ENCODE measurements at regions of chr1 and their contacts with region 1.

Region 1: GRCh38 chr1:109667452-109668122 is at the start of gene GSTM2:
- DNase-seq: peak; percentile 96
- ATAC-seq: peak; percentile 100
- total RNA-seq, gene GSTM2: 194 TPM

Region 2: DNA sequence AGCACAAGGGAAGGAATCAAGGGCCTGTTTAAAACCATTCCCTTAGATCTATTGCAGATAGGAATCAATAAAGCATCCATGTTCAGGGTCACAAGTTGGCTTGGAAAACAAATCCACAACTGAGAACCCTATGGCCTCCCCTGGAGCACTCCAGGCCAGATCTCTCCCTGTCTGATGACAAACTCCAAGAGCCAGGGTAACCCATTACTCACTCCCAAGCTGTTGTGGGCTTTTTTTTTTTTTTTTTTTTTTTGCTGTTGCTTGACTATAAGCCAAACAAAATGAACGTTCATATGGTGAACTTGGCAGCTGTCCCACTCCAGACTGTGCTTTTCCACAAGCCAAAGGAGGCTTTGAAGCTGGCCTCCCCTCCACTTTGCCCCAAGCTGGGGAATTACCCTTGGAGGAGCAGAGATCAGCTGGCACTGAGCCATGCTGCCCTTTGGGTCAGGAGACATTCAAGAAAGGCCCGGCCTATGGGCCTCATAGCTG is 1666.9 kb before region 1 on chr1:
- intact Hi-C with region 1: no loop called
- DNase-seq: peak; percentile 72
- ATAC-seq: peak; percentile 24

Region 3: GRCh38 chr1:109483672-109484518 is 183.7 kb before region 1 on chr1 and contains the start of gene ATXN7L2:
- intact Hi-C with region 1: no loop called
- DNase-seq: peak; percentile 95
- ATAC-seq: peak; percentile 90
- total RNA-seq, gene ATXN7L2: 5.0 TPM

Region 4: DNA sequence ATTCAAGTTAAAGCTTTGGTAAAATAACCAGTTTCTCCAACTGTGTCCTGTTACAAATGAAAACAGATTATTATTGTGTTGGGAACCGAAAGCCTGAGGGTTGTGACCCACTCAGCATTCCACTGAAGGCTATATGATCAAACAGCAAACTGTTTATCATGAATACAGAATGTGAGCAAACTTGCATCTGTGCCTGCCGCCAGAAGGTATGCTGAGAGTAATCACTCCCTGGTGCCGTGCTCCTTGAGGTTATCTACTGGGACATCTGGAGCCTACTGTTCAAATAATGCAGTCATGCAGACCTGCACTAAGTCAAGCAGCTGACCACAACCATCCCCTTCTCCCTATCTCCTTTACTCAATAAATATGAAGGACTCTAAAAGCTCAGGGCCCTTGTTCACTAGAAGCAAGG is 57.9 kb after region 1 on chr1:
- intact Hi-C with region 1: loop called (anchors 2 kb)
- DNase-seq: no peak
- ATAC-seq: no peak